ENCODE measurements at regions of chr4 and their contacts with region 1.

Region 1: GRCh38 chr4:113094802-113095201 is 45.3 kb downstream of the ANK2 start:
- DNase-seq: no peak
- H3K4me3 ChIP-seq: no peak overlapping the region
- H3K27ac ChIP-seq: no peak overlapping the region
- H3K4me1 ChIP-seq: no peaks in the 10 kb centered on the region
- H3K27me3 ChIP-seq: no peaks in the 10 kb centered on the region
- CTCF ChIP-seq: peak in 2 of 3 experiments; percentile 68 to 75; a peak in 3 of 4 replicates
- EP300 ChIP-seq: no peak
- POLR2A ChIP-seq: no peak
- RAD21 ChIP-seq: peak; percentile 92

Region 2: GRCh38 chr4:112946127-112946526 is 148.7 kb before region 1 on chr4:
- CTCF ChIA-PET with region 1: interaction called, 12 read pairs
- POLR2A ChIA-PET with region 1: no interaction called
- DNase-seq: no peak
- H3K4me3 ChIP-seq: no peak overlapping the region
- H3K27ac ChIP-seq: no peak overlapping the region
- H3K4me1 ChIP-seq: no peaks in the 10 kb centered on the region
- H3K27me3 ChIP-seq: no peaks in the 10 kb centered on the region
- CTCF ChIP-seq: no peak
- EP300 ChIP-seq: no peak
- POLR2A ChIP-seq: no peak
- RAD21 ChIP-seq: no peak

Region 3: GRCh38 chr4:112951362-112952312 is 143.2 kb before region 1 on chr4:
- CTCF ChIA-PET with region 1: interaction called, 12 read pairs
- POLR2A ChIA-PET with region 1: no interaction called
- DNase-seq: no peak
- H3K4me3 ChIP-seq: no peak overlapping the region
- H3K27ac ChIP-seq: no peak overlapping the region
- H3K4me1 ChIP-seq: no peaks in the 10 kb centered on the region
- H3K27me3 ChIP-seq: no peaks in the 10 kb centered on the region
- CTCF ChIP-seq: peak in 2 of 3 experiments; percentile 3 to 35; a peak in 2 of 4 replicates
- EP300 ChIP-seq: no peak
- POLR2A ChIP-seq: no peak
- RAD21 ChIP-seq: peak in 1 of 2 experiments; percentile 24; a peak in 2 of 4 replicates